ENCODE measurements at regions of chr12 and their contacts with region 1.

Region 1: GRCh38 chr12:7142056-7142644 is 12.0 kb downstream of the CLSTN3 start:
- DNase-seq: peak; percentile 36 to 71
- ATAC-seq: peak; percentile 73 to 77 (median 75)
- H3K4me3 ChIP-seq: no peak overlapping the region
- H3K4me3 Mint-ChIP-seq: no peak overlapping the region
- H3K27ac ChIP-seq: no peak overlapping the region
- H3K27ac Mint-ChIP-seq: no peak overlapping the region
- H3K4me1 ChIP-seq: no peaks in the 10 kb centered on the region
- H3K4me1 Mint-ChIP-seq: peaks cover 6 to 12% of the 10 kb centered on the region in 2 donors
- H3K27me3 ChIP-seq: no peaks in the 10 kb centered on the region
- H3K27me3 Mint-ChIP-seq: no peaks in the 10 kb centered on the region
- CTCF ChIP-seq: peak; percentile 57

Region 2: DNA sequence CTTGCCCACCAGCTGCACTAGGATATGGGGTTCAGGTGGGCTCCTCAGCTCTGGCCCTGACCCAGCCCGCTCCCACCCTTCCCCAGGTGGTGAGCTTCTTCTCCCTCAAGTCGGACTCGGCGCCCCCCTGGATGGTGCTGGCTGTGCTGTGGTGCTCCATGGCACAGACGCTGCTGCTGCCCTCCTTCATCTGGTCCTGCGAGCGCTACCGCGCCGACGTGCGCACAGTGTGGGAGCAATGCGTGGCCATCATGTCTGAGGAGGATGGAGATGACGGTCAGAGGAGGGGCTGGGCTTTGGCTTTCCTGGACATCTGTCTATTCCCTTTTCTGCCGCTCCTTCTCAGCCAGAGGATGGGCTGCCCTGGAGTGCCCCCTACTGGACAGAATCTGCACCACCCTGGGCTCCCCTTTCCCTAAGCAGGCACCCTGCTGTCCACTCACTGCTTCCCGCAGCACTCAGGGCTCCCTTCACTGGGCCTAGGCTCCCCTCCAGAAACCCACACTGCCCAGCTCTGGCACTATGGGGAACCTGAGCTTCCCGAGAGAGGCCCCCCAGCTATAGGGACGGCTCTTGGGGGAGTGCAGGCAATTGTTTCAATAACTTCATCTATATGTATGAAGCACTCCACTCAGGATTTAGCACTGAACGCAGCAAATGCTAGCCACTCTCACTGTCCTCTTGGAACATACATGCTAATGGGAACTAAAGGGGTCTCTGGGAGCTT is 316.6 kb before region 1 on chr12:
- intact Hi-C with region 1: no loop called
- DNase-seq: peak; percentile 60 to 88
- ATAC-seq: peak; percentile 57 to 72 (median 67)
- H3K4me3 ChIP-seq: no peak overlapping the region
- H3K4me3 Mint-ChIP-seq: peak overlapping the region; percentile 31
- H3K27ac ChIP-seq: no peak overlapping the region
- H3K27ac Mint-ChIP-seq: no peak overlapping the region
- H3K4me1 ChIP-seq: peaks cover 33% of the 10 kb centered on the region
- H3K4me1 Mint-ChIP-seq: peaks cover 20 to 39% of the 10 kb centered on the region in 2 donors
- H3K27me3 ChIP-seq: peaks cover 52% of the 10 kb centered on the region
- H3K27me3 Mint-ChIP-seq: peaks cover 55 to 73% of the 10 kb centered on the region in 2 donors
- CTCF ChIP-seq: peak; percentile 64

Region 3: GRCh38 chr12:7090222-7090998 is 51.7 kb before region 1 on chr12:
- intact Hi-C with region 1: no loop called
- DNase-seq: no peak
- ATAC-seq: no peak
- H3K4me3 ChIP-seq: no peak overlapping the region
- H3K4me3 Mint-ChIP-seq: no peak overlapping the region
- H3K27ac ChIP-seq: no peak overlapping the region
- H3K27ac Mint-ChIP-seq: peak overlapping the region in 1 of 2 donors; percentile 79
- H3K4me1 ChIP-seq: peaks cover 12% of the 10 kb centered on the region
- H3K4me1 Mint-ChIP-seq: peaks cover 0 to 22% of the 10 kb centered on the region in 2 donors
- H3K27me3 ChIP-seq: no peaks in the 10 kb centered on the region
- H3K27me3 Mint-ChIP-seq: no peaks in the 10 kb centered on the region
- CTCF ChIP-seq: no peak

Region 4: DNA sequence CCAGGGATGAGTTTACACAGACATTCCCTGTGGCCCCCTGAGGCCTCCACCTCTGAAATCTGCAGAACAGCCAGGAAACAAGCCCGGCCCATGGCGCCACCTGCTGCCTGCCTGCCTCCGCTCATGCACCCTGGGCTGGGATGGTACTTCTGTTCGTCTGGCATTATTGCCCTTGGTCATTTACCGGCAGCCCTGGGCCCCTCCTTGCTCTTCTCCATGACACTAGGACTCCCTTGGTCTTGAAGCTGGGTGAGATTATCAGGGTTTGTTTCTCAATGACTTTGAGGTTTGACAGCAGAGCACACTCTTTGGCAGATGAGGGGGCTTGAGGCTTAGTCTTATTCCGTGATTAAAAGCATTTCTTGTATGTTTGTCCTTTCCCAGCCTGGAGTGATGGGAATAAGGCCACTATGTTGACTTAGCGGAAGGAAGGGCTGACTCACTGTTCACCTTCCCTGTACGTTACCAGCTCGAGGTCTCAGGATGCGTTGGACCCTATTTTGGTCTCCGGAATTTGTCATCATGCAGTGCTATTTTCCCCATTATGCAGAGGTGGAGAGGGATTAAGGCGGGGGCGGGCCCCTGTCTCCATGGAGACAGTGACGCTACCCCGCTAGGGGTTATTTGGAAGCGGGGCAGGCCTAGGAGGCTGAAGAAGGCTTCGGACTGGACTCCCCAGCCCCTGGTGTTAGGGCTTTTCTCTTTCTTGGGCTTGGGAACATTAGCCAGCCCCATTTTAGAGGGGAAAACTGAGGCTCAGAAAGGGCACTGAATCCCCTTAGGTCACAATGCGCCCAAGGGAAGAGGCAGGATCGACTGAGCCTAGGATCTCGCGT is 46.6 kb after region 1 on chr12:
- intact Hi-C with region 1: loop called (anchors 1 kb)
- DNase-seq: peak; percentile 62 to 77
- ATAC-seq: peak; percentile 37 to 45 (median 42)
- H3K4me3 ChIP-seq: peak overlapping the region; percentile 87
- H3K4me3 Mint-ChIP-seq: peak overlapping the region; percentile 97
- H3K27ac ChIP-seq: peak overlapping the region; percentile 79
- H3K27ac Mint-ChIP-seq: peak overlapping the region; percentile 92 to 97
- H3K4me1 ChIP-seq: peaks cover 20% of the 10 kb centered on the region
- H3K4me1 Mint-ChIP-seq: peaks cover 40 to 44% of the 10 kb centered on the region in 2 donors
- H3K27me3 ChIP-seq: no peaks in the 10 kb centered on the region
- H3K27me3 Mint-ChIP-seq: no peaks in the 10 kb centered on the region
- CTCF ChIP-seq: peak; percentile 67

Measured in natural killer cell (primary cell).